A549 (cell line): ENCODE measurements at regions of chr12 and their contacts with region 1.

Region 1: GRCh38 chr12:71746983-71747611 is 7.6 kb upstream of the RAB21 start:
- DNase-seq: peak; percentile 40 to 74
- ATAC-seq: peak; percentile 88 to 94
- H3K4me3 ChIP-seq: no peak overlapping the region
- H3K27ac ChIP-seq: no peak overlapping the region
- H3K4me1 ChIP-seq: no peaks in the 10 kb centered on the region
- CTCF ChIP-seq: peak; percentile 86
- EP300 ChIP-seq: no peak
- POLR2A ChIP-seq: no peak
- RAD21 ChIP-seq: peak; percentile 91 to 94

Region 2: GRCh38 chr12:71415336-71416231 is 331.5 kb before region 1 on chr12:
- CTCF ChIA-PET with region 1: interaction called, 80 read pairs
- POLR2A ChIA-PET with region 1: no interaction called
- DNase-seq: peak; percentile 52 to 66
- ATAC-seq: peak; percentile 85 to 98
- H3K4me3 ChIP-seq: no peak overlapping the region
- H3K27ac ChIP-seq: no peak overlapping the region
- H3K4me1 ChIP-seq: no peaks in the 10 kb centered on the region
- CTCF ChIP-seq: peak; percentile 82
- EP300 ChIP-seq: no peak
- POLR2A ChIP-seq: no peak
- RAD21 ChIP-seq: peak; percentile 71 to 83

Region 3: DNA sequence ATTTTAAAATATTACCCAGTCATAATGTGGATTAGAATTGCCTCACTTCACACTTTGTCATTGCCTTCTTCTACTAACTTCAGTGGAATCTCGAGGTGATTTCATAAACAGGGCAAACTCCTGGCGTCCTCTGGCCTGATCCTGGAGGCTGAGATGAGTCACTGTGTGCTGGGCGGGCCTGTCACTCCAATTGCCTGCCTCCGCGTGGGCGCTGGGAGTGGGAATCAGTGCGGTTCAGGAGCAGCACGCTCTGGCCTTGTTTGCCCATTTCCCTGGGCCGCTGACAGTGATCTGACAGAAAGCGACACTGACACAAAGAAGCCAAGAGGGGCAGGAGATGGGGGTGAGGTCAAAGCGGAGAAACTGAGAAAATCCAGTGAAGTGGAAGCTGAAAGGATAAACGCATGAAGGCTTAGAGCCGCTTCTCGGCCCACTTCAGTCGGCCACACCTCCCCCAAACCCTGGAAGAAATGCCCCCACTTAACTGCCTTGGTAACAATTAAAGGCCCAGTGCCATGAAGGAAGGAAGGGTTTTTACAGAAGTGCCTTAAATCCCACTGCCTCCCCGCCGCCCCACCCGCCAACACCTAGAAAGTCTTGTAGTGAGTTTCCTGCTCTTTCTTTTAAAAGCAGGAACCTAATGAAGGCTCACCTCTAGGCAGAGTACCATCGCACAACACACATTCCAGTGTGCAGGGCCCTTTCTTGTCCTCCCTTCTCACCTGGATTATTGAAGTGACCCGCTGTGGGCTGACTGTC is 277.7 kb before region 1 on chr12:
- CTCF ChIA-PET with region 1: no interaction called
- POLR2A ChIA-PET with region 1: no interaction called
- DNase-seq: peak in 1 of 2 experiments; percentile 17
- ATAC-seq: peak; percentile 80 to 89; a peak in 5 of 6 replicates
- H3K4me3 ChIP-seq: no peak overlapping the region
- H3K27ac ChIP-seq: no peak overlapping the region
- H3K4me1 ChIP-seq: no peaks in the 10 kb centered on the region
- CTCF ChIP-seq: no peak
- EP300 ChIP-seq: no peak
- POLR2A ChIP-seq: no peak
- RAD21 ChIP-seq: no peak

Region 4: GRCh38 chr12:71645268-71645667 is 101.8 kb before region 1 on chr12:
- CTCF ChIA-PET with region 1: interaction called, 18 read pairs
- POLR2A ChIA-PET with region 1: no interaction called
- DNase-seq: no peak
- ATAC-seq: no peak
- H3K4me3 ChIP-seq: no peak overlapping the region
- H3K27ac ChIP-seq: no peak overlapping the region
- H3K4me1 ChIP-seq: peaks cover 3% of the 10 kb centered on the region; the same call in 2 of the 3 replicates
- CTCF ChIP-seq: no peak
- EP300 ChIP-seq: no peak
- POLR2A ChIP-seq: no peak
- RAD21 ChIP-seq: no peak

Region 5: GRCh38 chr12:71685914-71686665 is 61.0 kb before region 1 on chr12 and contains the start of gene TMEM19:
- CTCF ChIA-PET with region 1: interaction called, 93 read pairs
- POLR2A ChIA-PET with region 1: interaction called, 20 read pairs
- DNase-seq: peak; percentile 85 to 94
- ATAC-seq: peak; percentile 99
- H3K4me3 ChIP-seq: peak within 1 kb of the TSS; percentile 58
- H3K27ac ChIP-seq: peak within 1 kb of the TSS; percentile 87 to 96
- H3K4me1 ChIP-seq: peaks cover 29% of the 10 kb centered on the region; the same call in 2 of the 3 replicates
- CTCF ChIP-seq: peak; percentile 34; the same call in 1 of the 3 replicates
- EP300 ChIP-seq: no peak
- POLR2A ChIP-seq: peak; percentile 92
- RAD21 ChIP-seq: peak; percentile 17 to 39; a peak in 4 of 5 replicates
- polyA plus RNA-seq, gene TMEM19: 62.8 and 78.8 TPM in 2 replicates

Region 6: GRCh38 chr12:71760471-71760870 is 13.4 kb after region 1 on chr12:
- CTCF ChIA-PET with region 1: interaction called, 12 read pairs
- POLR2A ChIA-PET with region 1: no interaction called
- DNase-seq: no peak
- ATAC-seq: no peak
- H3K4me3 ChIP-seq: no peak overlapping the region
- H3K27ac ChIP-seq: no peak overlapping the region
- H3K4me1 ChIP-seq: peaks cover 6% of the 10 kb centered on the region; the same call in 1 of the 3 replicates
- CTCF ChIP-seq: no peak
- EP300 ChIP-seq: no peak
- POLR2A ChIP-seq: no peak
- RAD21 ChIP-seq: no peak